ENCODE measurements at regions of chr2 and their contacts with region 1.

Region 1: DNA sequence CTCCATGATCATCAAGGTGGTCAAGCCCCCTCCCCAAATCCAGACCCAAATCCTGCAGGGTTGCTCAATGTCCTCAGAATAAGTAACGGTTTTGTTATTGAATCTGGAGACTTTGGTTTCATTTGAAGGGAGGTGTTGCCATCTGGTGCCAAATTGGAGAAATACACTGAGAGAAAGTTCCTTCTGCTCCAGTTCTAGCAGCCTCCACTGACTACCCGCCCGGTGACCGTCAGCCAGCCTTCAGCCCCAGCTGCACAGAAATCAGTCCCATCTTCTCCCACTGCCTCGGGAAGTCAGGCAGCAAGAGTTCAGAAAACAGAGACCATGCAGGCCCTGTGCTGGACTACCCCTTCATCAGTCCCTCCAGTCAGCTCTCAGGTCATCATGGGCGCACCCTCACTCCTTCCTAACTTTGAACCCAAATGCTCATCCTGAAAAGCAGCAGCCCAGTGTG is 38.7 kb downstream of the PKDCC start:
- DNase-seq: no peak
- ATAC-seq: peak; percentile 54

Region 2: DNA sequence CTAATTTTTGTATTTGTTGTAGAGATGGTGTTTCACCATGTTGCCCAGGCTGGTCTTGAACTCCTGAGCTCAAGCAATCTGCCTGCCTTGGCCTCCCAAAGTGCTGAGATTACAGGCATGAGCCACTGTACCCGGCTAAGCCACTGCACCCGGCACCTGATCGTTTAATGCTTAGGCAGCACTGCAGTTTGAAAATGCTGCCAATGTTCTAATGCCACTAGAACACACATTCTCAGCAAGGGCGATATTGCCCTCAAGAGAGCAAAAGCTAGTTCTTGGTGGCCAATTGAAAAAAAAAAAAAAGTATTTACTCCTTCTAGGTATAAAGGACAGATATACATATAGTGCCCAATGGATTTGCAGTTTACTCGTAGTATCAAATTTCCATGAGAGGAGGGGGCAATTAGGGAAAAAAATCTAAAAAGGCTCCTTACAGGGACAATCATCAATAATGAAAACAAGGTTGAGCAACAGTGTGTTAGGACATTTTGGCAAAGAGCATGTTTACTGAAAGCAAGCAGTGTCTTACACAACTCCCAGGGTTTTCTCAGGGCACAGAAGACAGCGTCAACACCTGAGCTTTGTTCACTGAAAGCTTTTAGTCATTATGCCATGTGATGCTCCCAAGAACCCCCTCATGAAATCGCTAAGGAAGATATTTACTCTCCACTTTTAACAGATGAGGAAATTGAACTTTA is 238.6 kb before region 1 on chr2:
- intact Hi-C with region 1: no loop called
- DNase-seq: no peak
- ATAC-seq: no peak

Region 3: GRCh38 chr2:41859615-41860520 is 226.7 kb before region 1 on chr2:
- intact Hi-C with region 1: loop called (anchors 5 kb)
- DNase-seq: no peak
- ATAC-seq: no peak

Region 4: GRCh38 chr2:41869542-41870264 is 216.8 kb before region 1 on chr2:
- intact Hi-C with region 1: loop called (anchors 5 kb)
- DNase-seq: peak; percentile 87
- ATAC-seq: peak; percentile 90